ENCODE measurements at regions of chr5 and their contacts with region 1.

Region 1: DNA sequence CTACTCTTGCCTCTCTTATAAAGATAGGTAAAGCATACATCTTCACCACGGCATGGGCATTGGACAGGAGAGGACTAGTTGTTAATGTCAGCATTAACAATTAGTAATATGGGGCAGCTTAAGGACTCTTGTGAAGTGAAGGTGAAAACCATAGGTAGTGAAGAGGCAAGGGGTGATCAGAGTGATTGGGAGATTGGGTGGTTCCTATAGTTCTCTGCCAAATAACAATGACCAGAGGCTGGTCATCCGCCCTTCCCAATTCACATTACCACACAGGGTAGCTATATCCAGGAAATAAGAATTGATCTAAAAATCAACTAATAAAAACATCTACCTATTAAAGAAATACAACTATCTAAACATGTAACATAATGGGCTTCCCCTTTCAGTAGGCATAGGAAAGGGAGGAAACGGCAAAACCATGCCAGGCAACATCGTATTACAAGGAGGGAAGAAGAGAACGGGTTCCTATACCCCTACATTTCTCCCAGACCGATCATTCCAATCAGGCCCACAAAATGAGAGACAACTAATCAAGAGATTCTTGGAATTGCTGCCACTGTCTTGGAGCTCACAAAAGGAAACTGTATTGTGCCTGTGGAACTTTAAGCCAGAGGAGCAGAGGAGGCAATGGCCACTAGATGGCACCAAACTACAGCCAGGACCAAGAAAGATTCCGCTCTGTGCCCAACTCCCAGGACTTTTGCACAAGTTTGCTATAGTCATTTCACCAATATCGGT is 121.6 kb downstream of the FBXL17 start:
- DNase-seq: peak; percentile 59
- H3K4me3 Mint-ChIP-seq: no peak overlapping the region
- H3K27ac Mint-ChIP-seq: no peak overlapping the region
- H3K4me1 Mint-ChIP-seq: peaks cover 1% of the 10 kb centered on the region
- H3K27me3 Mint-ChIP-seq: no peaks in the 10 kb centered on the region

Region 2: DNA sequence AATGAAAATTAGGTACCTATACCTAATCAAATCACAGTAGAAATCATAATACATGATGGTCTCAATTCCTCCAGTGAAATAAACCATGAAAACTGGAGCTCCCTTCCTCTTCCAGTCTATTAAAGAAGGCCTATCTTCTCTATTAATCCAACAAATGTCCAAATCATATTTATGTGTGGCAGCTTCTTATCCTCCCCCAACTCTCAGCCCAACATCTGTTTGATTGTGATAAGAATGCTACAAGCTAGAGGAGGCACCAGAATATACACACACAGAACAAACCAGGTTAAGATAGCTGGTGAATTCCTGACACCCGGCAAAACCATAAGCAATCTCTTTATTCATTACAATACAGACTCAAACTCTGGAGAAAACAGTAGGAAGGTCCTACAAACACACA is 10.8 kb after region 1 on chr5:
- CTCF ChIA-PET with region 1: interaction called, 22 read pairs
- POLR2A ChIA-PET with region 1: no interaction called
- DNase-seq: no peak
- H3K4me3 Mint-ChIP-seq: no peak overlapping the region
- H3K27ac Mint-ChIP-seq: no peak overlapping the region
- H3K4me1 Mint-ChIP-seq: no peaks in the 10 kb centered on the region
- H3K27me3 Mint-ChIP-seq: no peaks in the 10 kb centered on the region

Region 3: GRCh38 chr5:108345541-108346171 is 85.4 kb after region 1 on chr5:
- CTCF ChIA-PET with region 1: interaction called, 34 read pairs
- POLR2A ChIA-PET with region 1: no interaction called
- DNase-seq: no peak
- H3K4me3 Mint-ChIP-seq: no peak overlapping the region
- H3K27ac Mint-ChIP-seq: no peak overlapping the region
- H3K4me1 Mint-ChIP-seq: no peaks in the 10 kb centered on the region
- H3K27me3 Mint-ChIP-seq: no peaks in the 10 kb centered on the region

Region 4: DNA sequence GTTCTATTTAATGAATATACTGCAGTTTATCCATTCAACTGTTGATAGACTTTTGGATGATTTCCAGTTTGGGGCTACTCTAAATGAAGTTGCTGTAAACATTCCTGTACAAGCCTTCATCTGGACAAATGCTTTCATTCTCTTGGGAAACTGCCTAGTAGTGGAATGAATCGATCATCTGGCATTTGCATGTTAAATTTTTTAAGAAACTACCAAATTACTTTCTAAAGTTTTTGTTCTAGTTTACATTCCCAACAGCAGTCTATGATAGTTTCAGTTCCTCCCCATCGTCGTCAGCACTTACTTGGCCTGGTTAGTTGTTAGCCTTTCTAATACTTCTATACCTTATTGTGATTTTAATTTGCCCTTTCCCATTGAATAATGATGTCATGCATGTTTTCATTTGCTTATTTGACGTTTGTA is 793.7 kb after region 1 on chr5:
- CTCF ChIA-PET with region 1: no interaction called
- POLR2A ChIA-PET with region 1: no interaction called
- DNase-seq: no peak
- H3K4me3 Mint-ChIP-seq: no peak overlapping the region
- H3K27ac Mint-ChIP-seq: no peak overlapping the region
- H3K4me1 Mint-ChIP-seq: no peaks in the 10 kb centered on the region
- H3K27me3 Mint-ChIP-seq: no peaks in the 10 kb centered on the region

Measured in activated CD4-positive, alpha-beta memory T cell treated with anti-CD3 and anti-CD28 coated beads, Interleukin-2, amount 10 ng/mL, durations not matched to agents 7 days and 5 days (primary cell).